ENCODE measurements at regions of chr11 and their contacts with region 1.

Region 1: GRCh38 chr11:131674051-131674755 is 303.8 kb downstream of the NTM start:
- DNase-seq: peak; percentile 54 to 82 (median 70)
- ATAC-seq: peak; percentile 70 to 87 (median 80)
- H3K4me3 ChIP-seq: no peak overlapping the region
- H3K27ac ChIP-seq: peak overlapping the region in 2 of 12 donors; percentile 26 to 48
- H3K4me1 ChIP-seq: peaks cover 0 to 10% (median 0%) of the 10 kb centered on the region in 12 donors
- H3K27me3 ChIP-seq: peaks cover 0 to 11% (median 0%) of the 10 kb centered on the region in 9 donors
- CTCF ChIP-seq: peak; percentile 86 to 95 (median 90)
- POLR2A ChIP-seq: no peak

Region 2: DNA sequence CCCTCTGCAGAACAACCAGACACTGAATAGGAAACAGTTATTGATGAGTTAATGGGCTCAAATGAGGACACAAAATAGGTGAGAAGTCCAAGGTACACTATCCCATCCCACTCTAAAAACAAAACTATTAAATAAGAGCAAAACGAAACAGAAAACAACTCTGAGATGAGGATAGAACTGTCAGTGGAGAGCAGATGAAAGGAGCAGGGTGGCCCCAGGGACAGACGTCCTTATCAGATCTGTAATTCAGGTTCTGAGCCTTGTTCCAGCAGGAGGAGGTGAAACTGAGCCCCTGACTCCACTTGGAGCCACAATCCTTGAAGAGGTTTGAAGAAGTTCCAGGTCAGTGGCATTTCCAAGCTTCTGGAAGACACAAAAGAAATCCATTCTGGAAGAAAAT is 749.4 kb before region 1 on chr11:
- intact Hi-C with region 1: loop called in 8 of 10 experiments (anchors 5 to 10 kb)
- DNase-seq: no peak
- ATAC-seq: no peak
- H3K4me3 ChIP-seq: no peak overlapping the region
- H3K27ac ChIP-seq: no peak overlapping the region
- H3K4me1 ChIP-seq: no peaks in the 10 kb centered on the region
- H3K27me3 ChIP-seq: no peaks in the 10 kb centered on the region
- CTCF ChIP-seq: no peak
- POLR2A ChIP-seq: no peak

Region 3: DNA sequence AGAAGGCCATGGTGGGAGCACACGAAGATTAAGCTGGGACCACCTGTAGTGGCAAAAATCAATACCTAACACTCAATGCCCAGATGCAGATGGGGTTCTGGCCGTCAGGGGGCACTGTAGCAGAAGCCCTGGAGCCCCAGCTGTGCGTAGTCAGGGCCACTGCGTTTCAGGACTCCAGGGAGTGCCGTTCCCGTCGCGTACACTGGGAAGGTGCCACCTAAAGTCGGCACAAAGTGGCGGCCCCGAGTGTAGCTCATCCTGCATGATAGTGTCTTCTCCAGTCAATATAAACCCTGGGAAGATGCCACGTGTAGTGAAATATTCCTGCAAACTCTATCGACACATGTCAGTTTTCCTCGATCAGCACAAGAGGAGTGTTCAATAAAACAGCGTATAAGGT is 427.5 kb before region 1 on chr11:
- intact Hi-C with region 1: loop called in 7 of 10 experiments (anchors 5 to 10 kb)
- DNase-seq: peak in 2 of 5 donors; percentile 44 to 45
- ATAC-seq: peak in 3 of 4 donors; percentile 71 to 82 (median 77)
- H3K4me3 ChIP-seq: no peak overlapping the region
- H3K27ac ChIP-seq: no peak overlapping the region
- H3K4me1 ChIP-seq: peaks cover 0 to 5% (median 0%) of the 10 kb centered on the region in 12 donors
- H3K27me3 ChIP-seq: peaks cover 0 to 32% (median 0%) of the 10 kb centered on the region in 9 donors
- CTCF ChIP-seq: peak in 11 of 12 donors; percentile 21 to 58 (median 46)
- POLR2A ChIP-seq: no peak

Region 4: GRCh38 chr11:131392528-131393255 is 281.5 kb before region 1 on chr11:
- intact Hi-C with region 1: no loop called
- DNase-seq: no peak
- ATAC-seq: no peak
- H3K4me3 ChIP-seq: no peak overlapping the region
- H3K27ac ChIP-seq: no peak overlapping the region
- H3K4me1 ChIP-seq: no peaks in the 10 kb centered on the region
- H3K27me3 ChIP-seq: peaks cover 0 to 8% (median 0%) of the 10 kb centered on the region in 9 donors
- CTCF ChIP-seq: no peak
- POLR2A ChIP-seq: no peak

Region 5: DNA sequence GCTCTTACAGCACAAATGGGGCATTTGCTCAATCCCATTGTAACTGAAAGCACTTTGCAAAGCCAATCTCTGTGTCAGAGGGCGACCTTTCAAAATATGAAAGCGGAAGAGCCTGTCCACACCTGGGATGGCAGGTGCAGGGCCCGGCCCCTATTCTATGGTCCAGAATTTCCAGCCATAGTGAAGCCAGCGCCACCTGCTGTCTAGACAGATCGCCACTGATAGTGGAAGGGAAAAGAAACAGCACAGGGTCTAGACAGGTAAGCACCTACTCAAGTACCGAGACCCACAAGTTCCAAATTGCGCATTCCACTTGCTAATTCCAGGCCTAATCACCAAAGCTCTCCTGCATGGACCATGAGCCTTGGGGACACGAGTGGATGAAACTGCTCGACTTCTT is 162.4 kb before region 1 on chr11:
- intact Hi-C with region 1: loop called in 1 of 10 experiments (anchors 10 kb)
- DNase-seq: peak in 1 of 5 donors; percentile 49
- ATAC-seq: peak in 3 of 4 donors; percentile 37 to 59 (median 46)
- H3K4me3 ChIP-seq: no peak overlapping the region
- H3K27ac ChIP-seq: no peak overlapping the region
- H3K4me1 ChIP-seq: no peaks in the 10 kb centered on the region
- H3K27me3 ChIP-seq: no peaks in the 10 kb centered on the region
- CTCF ChIP-seq: peak in 11 of 12 donors; percentile 13 to 58 (median 43)
- POLR2A ChIP-seq: no peak

Region 6: GRCh38 chr11:131584785-131585592 is 89.2 kb before region 1 on chr11:
- intact Hi-C with region 1: loop called in 7 of 10 experiments (anchors 1 to 10 kb)
- DNase-seq: no peak
- ATAC-seq: no peak
- H3K4me3 ChIP-seq: no peak overlapping the region
- H3K27ac ChIP-seq: no peak overlapping the region
- H3K4me1 ChIP-seq: no peaks in the 10 kb centered on the region
- H3K27me3 ChIP-seq: peaks cover 0 to 39% (median 0%) of the 10 kb centered on the region in 9 donors
- CTCF ChIP-seq: peak in 6 of 12 donors; percentile 6 to 25 (median 15)
- POLR2A ChIP-seq: no peak